Common myeloid progenitor, CD34-positive (primary cell): ENCODE measurements at regions of chr21 and their contacts with region 1.

Region 1: GRCh38 chr21:37758982-37759381 is 157.3 kb downstream of the KCNJ6 start:
- DNase-seq: peak; percentile 37 to 70 (median 62)
- H3K4me3 ChIP-seq: no peak overlapping the region
- H3K27ac ChIP-seq: no peak overlapping the region
- H3K4me1 ChIP-seq: no peaks in the 10 kb centered on the region
- H3K27me3 ChIP-seq: peaks cover 0 to 19% (median 0%) of the 10 kb centered on the region in 5 experiments

Region 2: GRCh38 chr21:38126669-38127303 is 367.8 kb after region 1 on chr21:
- CTCF ChIA-PET with region 1: interaction called, 36 read pairs
- POLR2A ChIA-PET with region 1: no interaction called
- DNase-seq: peak; percentile 48 to 76 (median 76)
- H3K4me3 ChIP-seq: no peak overlapping the region
- H3K27ac ChIP-seq: no peak overlapping the region
- H3K4me1 ChIP-seq: no peaks in the 10 kb centered on the region
- H3K27me3 ChIP-seq: peaks cover 0 to 11% (median 5%) of the 10 kb centered on the region in 5 experiments